WTC11 (cell line): ENCODE measurements at regions of chr7 and their contacts with region 1.

Region 1: DNA sequence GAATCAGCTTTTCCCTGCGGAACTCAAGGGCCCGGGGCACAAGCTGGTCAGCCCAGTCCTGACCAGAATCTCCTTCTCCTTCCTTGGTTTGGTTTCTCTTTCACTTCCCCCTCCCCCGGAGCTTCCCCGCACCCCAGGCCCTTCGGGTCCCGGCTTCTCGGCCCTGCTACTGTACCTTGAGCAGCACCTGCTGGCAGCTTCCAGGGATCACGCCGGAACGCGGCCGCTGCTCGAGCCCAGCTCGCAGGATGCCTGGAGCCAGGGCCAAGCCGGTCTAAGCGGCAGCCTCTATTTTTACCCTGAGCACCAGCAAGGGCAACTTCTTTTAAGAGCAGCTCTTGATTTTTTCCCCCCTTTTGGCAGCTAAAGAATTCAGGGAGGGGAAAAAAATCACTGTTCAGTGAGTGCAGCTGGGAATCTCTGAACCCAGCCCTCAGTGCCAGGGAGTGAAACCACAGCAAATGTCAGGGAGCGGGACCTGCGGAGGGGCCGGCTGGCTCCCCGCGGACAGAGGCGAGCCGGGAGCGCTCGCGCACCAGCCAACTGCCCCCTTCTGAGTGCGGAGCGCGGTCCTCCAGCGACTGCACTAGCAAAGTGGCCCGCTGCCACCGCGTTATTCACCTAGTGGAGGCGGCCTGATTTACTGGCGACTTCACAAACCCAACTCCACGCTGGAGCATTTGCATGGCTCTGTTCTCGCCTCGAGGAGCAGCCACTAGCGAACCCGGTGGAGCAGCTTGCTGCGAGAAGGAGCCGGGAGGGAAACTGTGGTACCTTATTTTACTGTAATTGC is 2.4 kb upstream of the INHBA start:
- DNase-seq: peak; percentile 94
- ATAC-seq: peak; percentile 94
- H3K4me3 Mint-ChIP-seq: peak overlapping the region; percentile 72
- H3K27ac Mint-ChIP-seq: no peak overlapping the region
- H3K4me1 Mint-ChIP-seq: peaks cover 53% of the 10 kb centered on the region
- H3K27me3 Mint-ChIP-seq: peaks cover 28% of the 10 kb centered on the region
- CTCF ChIP-seq: peak; percentile 53; the same call in 1 of the 2 replicates

Region 2: GRCh38 chr7:40604601-40605438 is 1100.5 kb before region 1 on chr7:
- CTCF ChIA-PET with region 1: interaction called, 10 read pairs
- POLR2A ChIA-PET with region 1: no interaction called
- DNase-seq: peak; percentile 74
- ATAC-seq: peak; percentile 98
- H3K4me3 Mint-ChIP-seq: no peak overlapping the region
- H3K27ac Mint-ChIP-seq: no peak overlapping the region
- H3K4me1 Mint-ChIP-seq: peaks cover 12% of the 10 kb centered on the region
- H3K27me3 Mint-ChIP-seq: no peaks in the 10 kb centered on the region
- CTCF ChIP-seq: peak; percentile 47; the same call in 1 of the 2 replicates

Region 3: GRCh38 chr7:41003031-41003925 is 702.0 kb before region 1 on chr7:
- CTCF ChIA-PET with region 1: interaction called, 20 read pairs
- POLR2A ChIA-PET with region 1: no interaction called
- DNase-seq: peak; percentile 83
- ATAC-seq: peak; percentile 62
- H3K4me3 Mint-ChIP-seq: no peak overlapping the region
- H3K27ac Mint-ChIP-seq: no peak overlapping the region
- H3K4me1 Mint-ChIP-seq: peaks cover 11% of the 10 kb centered on the region; the same call in 1 of the 2 replicates
- H3K27me3 Mint-ChIP-seq: no peaks in the 10 kb centered on the region; the same call in 1 of the 2 replicates
- CTCF ChIP-seq: peak; percentile 85

Region 4: GRCh38 chr7:41315764-41316163 is 389.5 kb before region 1 on chr7:
- CTCF ChIA-PET with region 1: interaction called, 31 read pairs
- POLR2A ChIA-PET with region 1: no interaction called
- DNase-seq: peak; percentile 77
- ATAC-seq: peak; percentile 98
- H3K4me3 Mint-ChIP-seq: no peak overlapping the region
- H3K27ac Mint-ChIP-seq: no peak overlapping the region
- H3K4me1 Mint-ChIP-seq: peaks cover 23% of the 10 kb centered on the region
- H3K27me3 Mint-ChIP-seq: no peaks in the 10 kb centered on the region
- CTCF ChIP-seq: peak; percentile 58

Region 5: GRCh38 chr7:41599760-41600159 is 105.5 kb before region 1 on chr7:
- CTCF ChIA-PET with region 1: interaction called, 12 read pairs
- POLR2A ChIA-PET with region 1: no interaction called
- DNase-seq: peak; percentile 86
- ATAC-seq: peak; percentile 98
- H3K4me3 Mint-ChIP-seq: no peak overlapping the region
- H3K27ac Mint-ChIP-seq: no peak overlapping the region
- H3K4me1 Mint-ChIP-seq: peaks cover 2% of the 10 kb centered on the region; the same call in 1 of the 2 replicates
- H3K27me3 Mint-ChIP-seq: no peaks in the 10 kb centered on the region
- CTCF ChIP-seq: peak; percentile 85

Region 6: DNA sequence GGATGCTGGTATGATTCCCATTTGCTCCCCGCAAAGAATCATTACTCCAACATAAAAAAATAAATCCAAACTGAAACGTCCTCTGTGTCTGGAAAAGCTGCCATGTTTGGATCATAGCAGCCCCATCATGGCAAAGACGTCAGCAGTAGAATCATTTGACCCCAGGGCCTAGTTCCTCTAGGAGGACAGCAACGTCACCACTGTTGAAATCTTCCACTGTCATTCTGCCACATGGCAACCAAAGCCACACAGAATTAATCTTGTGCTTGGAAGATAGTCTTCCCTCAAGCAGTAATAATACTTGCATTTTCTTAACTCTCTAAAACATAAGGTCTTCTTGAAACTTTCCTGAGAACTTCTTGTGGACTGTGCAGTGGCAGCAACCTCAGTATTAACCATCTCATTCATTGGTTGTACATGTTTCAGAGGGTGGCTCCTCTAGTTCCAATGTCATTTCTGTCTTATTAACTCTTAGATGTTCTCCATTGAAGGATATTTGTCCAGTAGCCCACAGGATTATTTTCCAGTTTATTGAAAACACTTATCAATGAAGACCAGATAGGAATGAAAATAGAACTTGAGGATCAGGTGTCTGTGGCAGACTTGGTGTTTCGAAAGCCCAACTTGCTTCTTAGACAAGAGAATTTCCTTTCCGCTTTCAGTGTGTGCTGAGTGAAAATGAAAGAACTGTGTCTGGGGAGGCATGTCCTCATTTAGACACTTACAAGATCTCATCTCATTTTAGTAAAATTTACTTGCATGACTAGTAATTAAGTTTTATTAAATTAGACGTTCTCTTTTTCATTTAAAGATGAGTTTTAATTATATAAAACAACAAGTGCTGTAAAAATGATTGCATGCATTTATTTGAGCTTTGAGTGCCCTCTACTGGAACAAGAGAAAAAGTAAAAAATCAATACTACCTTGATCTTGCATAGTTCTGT is 26.5 kb after region 1 on chr7:
- CTCF ChIA-PET with region 1: interaction called, 12 read pairs
- POLR2A ChIA-PET with region 1: no interaction called
- DNase-seq: no peak
- ATAC-seq: no peak
- H3K4me3 Mint-ChIP-seq: no peak overlapping the region
- H3K27ac Mint-ChIP-seq: no peak overlapping the region
- H3K4me1 Mint-ChIP-seq: peaks cover 12% of the 10 kb centered on the region
- H3K27me3 Mint-ChIP-seq: no peaks in the 10 kb centered on the region; the same call in 1 of the 2 replicates
- CTCF ChIP-seq: no peak